ENCODE measurements at regions of chr9 and their contacts with region 1.

Region 1: GRCh38 chr9:100411472-100412283 is 15.3 kb upstream of the MSANTD3 start:
- DNase-seq: peak; percentile 93

Region 2: GRCh38 chr9:100426530-100427428 is 15.1 kb after region 1 on chr9 and contains the start of gene MSANTD3:
- CTCF ChIA-PET with region 1: interaction called, 4 read pairs
- POLR2A ChIA-PET with region 1: interaction called, 12 read pairs
- DNase-seq: peak; percentile 78